Aorta (tissue), 5 donors: ENCODE measurements at regions of chr21 and their contacts with region 1.

Region 1: DNA sequence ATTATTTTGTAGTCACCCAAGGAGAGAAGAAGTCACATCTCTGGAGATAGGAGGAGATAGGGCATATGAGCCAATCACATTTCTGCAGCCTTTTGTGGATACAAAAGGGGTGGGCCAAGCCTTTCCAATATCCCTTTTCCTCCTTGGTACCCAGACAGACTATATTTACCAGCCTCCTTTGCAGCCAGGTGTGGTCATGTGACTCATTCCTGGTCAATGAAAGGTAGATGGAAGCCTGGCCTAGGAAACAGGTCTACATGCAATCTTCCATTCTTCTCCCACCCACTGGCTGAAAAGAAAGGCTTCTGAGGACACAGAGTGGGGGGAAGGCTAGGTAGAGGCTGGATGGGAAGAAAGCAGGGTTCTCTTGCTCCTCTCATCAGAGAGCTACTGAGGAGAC is 58.1 kb upstream of the ERG start:
- DNase-seq: no peak
- ATAC-seq: no peak
- H3K4me3 ChIP-seq: no peak overlapping the region
- H3K27ac ChIP-seq: no peak overlapping the region
- H3K4me1 ChIP-seq: peaks cover 2% of the 10 kb centered on the region in 2 donors
- H3K27me3 ChIP-seq: no peaks in the 10 kb centered on the region

Region 2: GRCh38 chr21:38505654-38506515 is 50.5 kb before region 1 on chr21:
- intact Hi-C with region 1: no loop called
- DNase-seq: no peak
- ATAC-seq: peak; percentile 86
- H3K4me3 ChIP-seq: peak overlapping the region; percentile 58 to 65
- H3K27ac ChIP-seq: peak overlapping the region in 1 of 2 donors; percentile 69
- H3K4me1 ChIP-seq: peaks cover 0 to 7% of the 10 kb centered on the region in 2 donors
- H3K27me3 ChIP-seq: no peaks in the 10 kb centered on the region

Region 3: DNA sequence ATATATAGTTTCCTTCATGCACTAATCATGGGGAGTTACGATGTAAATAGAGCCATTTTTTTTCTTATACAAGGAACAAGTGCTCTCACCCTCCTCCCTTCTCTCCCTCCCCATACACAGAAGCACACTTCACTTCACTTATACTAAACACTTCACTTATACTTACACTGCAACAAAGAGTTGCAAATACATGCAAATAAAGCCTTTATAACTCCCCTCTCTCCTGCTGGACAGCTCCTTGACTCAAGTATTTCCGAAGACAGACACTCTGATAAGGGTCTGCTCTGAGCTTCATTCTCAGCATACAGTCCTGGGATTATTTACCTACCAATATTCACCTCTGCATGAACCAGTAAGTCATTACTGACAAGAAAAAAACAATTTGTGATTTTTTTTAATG is 22.5 kb before region 1 on chr21:
- intact Hi-C with region 1: loop called in 1 of 2 experiments (anchors 2 kb)
- DNase-seq: no peak
- ATAC-seq: no peak
- H3K4me3 ChIP-seq: no peak overlapping the region
- H3K27ac ChIP-seq: no peak overlapping the region
- H3K4me1 ChIP-seq: peaks cover 0 to 9% of the 10 kb centered on the region in 2 donors
- H3K27me3 ChIP-seq: no peaks in the 10 kb centered on the region

Region 4: DNA sequence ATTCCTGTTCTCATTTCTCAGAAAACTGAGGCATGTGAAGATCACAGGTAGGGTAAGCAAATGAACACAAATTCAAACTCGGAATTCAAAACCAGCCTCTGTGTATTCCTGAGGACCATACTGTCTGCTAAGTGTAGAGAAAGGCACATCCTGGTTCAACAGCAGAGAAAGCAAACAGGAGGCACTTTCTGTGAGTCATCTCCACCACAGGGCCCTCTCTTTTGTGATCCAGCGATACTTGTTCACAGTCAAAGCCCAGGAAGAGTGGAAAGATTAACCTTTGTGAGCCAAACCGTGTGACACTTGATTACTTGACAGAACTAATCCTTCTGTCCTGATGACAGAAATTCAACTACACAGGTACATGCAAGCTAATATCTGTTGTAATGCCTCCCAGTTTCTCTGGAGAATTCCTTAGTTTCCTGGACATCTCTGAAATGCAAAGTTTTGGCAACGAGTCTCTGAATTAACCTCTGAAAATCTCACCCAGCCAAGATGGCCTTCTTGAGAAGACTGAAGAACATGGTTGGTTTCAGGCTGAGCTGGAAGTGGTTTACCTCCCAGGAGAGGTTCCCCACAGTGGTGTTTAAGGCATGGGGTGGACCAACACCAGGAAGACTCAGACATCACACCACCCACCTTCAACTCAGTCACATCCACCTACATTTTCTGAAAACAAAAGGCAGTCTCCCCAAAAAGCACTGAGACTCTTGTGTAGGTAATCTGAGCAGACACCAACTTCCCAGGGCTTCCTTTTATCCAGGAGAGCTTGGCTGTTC is 40.0 kb after region 1 on chr21:
- intact Hi-C with region 1: no loop called
- DNase-seq: no peak
- ATAC-seq: no peak
- H3K4me3 ChIP-seq: no peak overlapping the region
- H3K27ac ChIP-seq: peak overlapping the region in 1 of 2 donors; percentile 14
- H3K4me1 ChIP-seq: peaks cover 6 to 8% of the 10 kb centered on the region in 2 donors
- H3K27me3 ChIP-seq: no peaks in the 10 kb centered on the region